Activated T-helper 1 cell treated with anti-CD3 and anti-CD28 coated beads, Interleukin-12 subunit alpha, Interleukin-12 subunit beta, Interleukin-2, Interleukin-4 antibody, amounts not matched to agents 30 ng/mL and 10 ng/mL and 1 ng/mL, durations not matched to agents 14 hours and 24 hours and 36 hours (primary cell): ENCODE measurements at regions of chr2 and their contacts with region 1.

Region 1: GRCh38 chr2:24084386-24085361 is at the start of gene TP53I3:
- DNase-seq: peak; percentile 77
- H3K4me3 Mint-ChIP-seq: peak within 1 kb of the TSS; percentile 85
- H3K27ac Mint-ChIP-seq: peak within 1 kb of the TSS; percentile 75
- H3K4me1 Mint-ChIP-seq: peaks cover 18% of the 10 kb centered on the region
- H3K27me3 Mint-ChIP-seq: no peaks in the 10 kb centered on the region
- total RNA-seq, gene TP53I3: 0.70 and 0.96 TPM in 2 replicates

Region 2: DNA sequence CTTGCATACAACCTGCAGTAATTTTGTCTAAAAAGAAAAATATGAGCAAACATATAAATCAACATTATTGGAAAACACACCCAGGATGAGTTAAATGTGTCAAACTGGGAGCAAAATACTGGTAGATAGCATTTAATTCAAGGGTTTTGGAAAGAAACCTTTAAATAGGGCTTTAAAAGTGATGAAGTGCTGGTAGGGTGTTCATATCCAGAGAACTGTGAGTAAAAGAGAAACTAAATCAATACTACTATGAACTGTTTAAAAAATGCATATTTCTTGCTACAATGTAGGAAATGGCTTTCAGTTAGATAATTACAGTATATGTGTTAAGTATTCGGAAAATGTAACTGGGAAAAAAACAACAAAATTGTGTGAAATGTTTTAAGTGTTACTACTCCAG is 275.5 kb before region 1 on chr2:
- intact Hi-C with region 1: loop called (anchors 5 kb)
- DNase-seq: no peak
- H3K4me3 Mint-ChIP-seq: no peak overlapping the region
- H3K27ac Mint-ChIP-seq: no peak overlapping the region
- H3K4me1 Mint-ChIP-seq: peaks cover 17% of the 10 kb centered on the region
- H3K27me3 Mint-ChIP-seq: no peaks in the 10 kb centered on the region

Region 3: DNA sequence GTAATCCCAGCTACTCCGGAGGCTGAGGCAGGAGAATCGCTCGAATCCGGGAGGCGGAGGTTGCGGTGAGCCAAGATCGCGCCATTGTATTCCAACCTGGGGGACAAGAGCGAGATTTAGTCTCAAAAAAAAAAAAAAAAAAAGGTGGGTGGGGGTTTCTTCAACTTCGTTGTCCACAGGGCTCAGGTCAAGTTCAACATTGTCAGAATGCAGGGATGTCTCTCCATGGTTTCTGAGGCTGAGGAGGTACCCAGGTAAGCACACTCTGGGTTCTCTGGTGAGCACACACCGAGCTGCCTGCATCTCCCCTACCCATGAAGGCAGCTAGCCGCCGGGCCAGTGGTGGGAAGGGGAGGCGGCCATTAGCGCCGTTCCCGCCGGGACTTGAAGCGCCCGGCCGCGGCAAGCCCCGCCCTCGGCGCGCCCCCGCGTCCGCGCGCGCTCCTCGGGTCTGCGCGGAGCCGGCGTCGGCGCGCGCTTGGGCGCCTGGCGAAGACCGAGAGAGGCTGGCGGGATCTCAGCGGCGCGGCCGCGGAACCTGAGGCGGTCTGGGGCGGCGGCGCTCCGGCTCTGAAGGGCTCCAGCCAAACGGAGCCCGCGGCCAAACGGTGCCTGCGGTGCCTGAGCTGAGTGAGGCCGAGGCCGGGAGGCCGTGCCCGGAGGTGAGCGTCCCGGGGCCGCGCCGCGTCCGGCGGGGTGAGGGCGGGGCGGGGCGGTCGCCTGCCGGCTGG is 144.5 kb before region 1 on chr2 and contains the start of gene UBXN2A:
- intact Hi-C with region 1: loop called (anchors 1 kb)
- DNase-seq: peak; percentile 72
- H3K4me3 Mint-ChIP-seq: peak within 1 kb of the TSS; percentile 89
- H3K27ac Mint-ChIP-seq: peak within 1 kb of the TSS; percentile 74
- H3K4me1 Mint-ChIP-seq: peaks cover 26% of the 10 kb centered on the region
- H3K27me3 Mint-ChIP-seq: peaks cover 21% of the 10 kb centered on the region
- total RNA-seq, gene UBXN2A: 11.4 and 13.0 TPM in 2 replicates

Region 4: GRCh38 chr2:24046930-24047702 is 37.6 kb before region 1 on chr2 and contains the start of gene WDCP:
- intact Hi-C with region 1: loop called (anchors 2 kb)
- DNase-seq: peak; percentile 92
- H3K4me3 Mint-ChIP-seq: peak within 1 kb of the TSS; percentile 94
- H3K27ac Mint-ChIP-seq: peak within 1 kb of the TSS; percentile 86
- H3K4me1 Mint-ChIP-seq: peaks cover 24% of the 10 kb centered on the region
- H3K27me3 Mint-ChIP-seq: no peaks in the 10 kb centered on the region
- total RNA-seq, gene WDCP: 21.9 and 23.1 TPM in 2 replicates

Region 5: GRCh38 chr2:24065341-24065740 is 19.3 kb before region 1 on chr2:
- intact Hi-C with region 1: no loop called
- DNase-seq: no peak
- H3K4me3 Mint-ChIP-seq: no peak overlapping the region
- H3K27ac Mint-ChIP-seq: no peak overlapping the region
- H3K4me1 Mint-ChIP-seq: peaks cover 16% of the 10 kb centered on the region
- H3K27me3 Mint-ChIP-seq: no peaks in the 10 kb centered on the region

Region 6: DNA sequence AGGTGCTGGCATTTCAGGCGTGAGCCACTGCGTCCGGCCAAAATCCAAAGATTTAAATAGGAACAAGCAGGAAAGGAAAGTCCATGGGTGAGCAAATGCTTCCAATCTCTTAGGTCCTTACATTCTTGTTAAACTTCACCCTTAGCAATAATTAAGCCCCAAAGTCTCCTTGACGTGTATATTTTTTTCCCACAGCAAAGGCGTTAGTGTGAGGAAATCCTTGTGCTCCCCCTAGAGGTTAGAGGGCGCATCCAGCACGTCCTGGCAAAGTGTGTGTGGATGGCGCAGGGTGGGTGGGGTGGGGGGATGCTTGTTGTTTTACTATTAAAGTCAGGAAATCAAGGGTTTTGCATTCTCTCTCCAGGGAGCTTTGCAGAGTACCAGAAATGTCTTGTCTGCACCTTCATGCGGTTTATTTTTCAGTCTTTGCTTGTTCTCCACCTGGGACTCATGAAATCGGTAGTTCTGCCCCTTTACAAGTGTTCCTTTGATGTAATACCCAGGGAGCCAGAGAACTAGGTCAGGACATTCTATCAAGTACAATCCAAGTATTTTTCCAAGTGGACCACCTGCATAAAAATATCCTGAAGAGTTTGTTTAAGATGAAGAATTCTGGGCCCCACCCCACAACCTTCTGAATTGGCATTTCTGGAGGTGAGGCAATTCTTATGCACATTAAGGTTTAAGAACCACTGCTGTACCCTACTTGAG is 297.8 kb after region 1 on chr2:
- intact Hi-C with region 1: loop called (anchors 1 kb)
- DNase-seq: peak; percentile 39
- H3K4me3 Mint-ChIP-seq: no peak overlapping the region
- H3K27ac Mint-ChIP-seq: no peak overlapping the region
- H3K4me1 Mint-ChIP-seq: no peaks in the 10 kb centered on the region
- H3K27me3 Mint-ChIP-seq: no peaks in the 10 kb centered on the region